Activated B cell treated with CpG ODN at 0.5 μM for 24 hours (primary cell): ENCODE measurements at regions of chr1 and their contacts with region 1.

Region 1: GRCh38 chr1:207004981-207005830 is 27.4 kb downstream of the C1orf116 start:
- DNase-seq: no peak
- ATAC-seq: peak; percentile 52
- H3K4me3 Mint-ChIP-seq: no peak overlapping the region
- H3K27ac Mint-ChIP-seq: no peak overlapping the region
- H3K4me1 Mint-ChIP-seq: peaks cover 2% of the 10 kb centered on the region
- H3K27me3 Mint-ChIP-seq: peaks cover 14% of the 10 kb centered on the region
- CTCF ChIP-seq: peak; percentile 47

Region 2: DNA sequence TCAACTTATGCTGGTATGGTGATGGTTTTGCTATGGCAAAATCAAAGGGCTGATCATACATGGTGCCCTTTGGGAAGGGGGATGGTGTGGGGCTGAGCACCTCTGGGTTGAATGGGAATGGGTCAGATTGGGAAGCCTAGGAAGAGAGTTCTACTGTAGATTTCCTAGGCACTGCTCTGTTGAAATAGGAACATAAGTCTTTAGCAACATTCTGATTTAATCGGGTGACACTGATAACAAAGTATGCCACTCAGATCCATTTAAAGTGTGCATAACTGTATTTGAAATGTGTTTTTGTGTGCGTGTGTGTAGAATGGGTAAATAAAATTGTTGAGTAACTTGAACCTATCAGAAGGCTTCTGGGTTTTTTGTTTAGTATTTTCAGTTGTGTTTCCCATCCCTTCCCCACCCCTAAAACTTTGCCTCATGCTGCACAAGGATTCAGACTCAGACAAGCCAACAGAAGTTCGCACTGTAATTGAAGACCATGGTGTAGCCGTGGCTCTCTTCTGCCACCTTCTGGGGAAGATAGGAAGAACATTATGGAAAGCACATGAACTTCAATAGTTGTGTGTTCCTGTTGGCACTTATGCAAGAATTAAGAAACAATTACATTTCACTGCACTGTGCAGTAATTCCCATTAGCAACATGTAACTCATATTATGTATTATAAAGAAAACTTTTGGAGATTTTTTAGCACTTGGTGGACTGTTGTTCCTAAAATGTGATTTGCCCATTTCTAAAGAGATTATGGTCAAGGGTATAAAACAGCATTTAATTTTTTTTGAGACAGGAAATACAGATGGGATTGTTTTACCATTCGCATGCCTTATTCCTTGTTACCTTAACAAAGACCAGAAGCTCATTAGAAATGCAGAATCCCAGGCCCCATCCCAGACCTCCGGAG is 72.5 kb after region 1 on chr1:
- CTCF ChIA-PET with region 1: no interaction called
- POLR2A ChIA-PET with region 1: no interaction called
- intact Hi-C with region 1: loop called (anchors 5 kb)
- DNase-seq: no peak
- ATAC-seq: peak; percentile 95
- H3K4me3 Mint-ChIP-seq: no peak overlapping the region
- H3K27ac Mint-ChIP-seq: no peak overlapping the region
- H3K4me1 Mint-ChIP-seq: no peaks in the 10 kb centered on the region
- H3K27me3 Mint-ChIP-seq: no peaks in the 10 kb centered on the region
- CTCF ChIP-seq: no peak

Region 3: GRCh38 chr1:207145401-207146058 is 140.3 kb after region 1 on chr1:
- CTCF ChIA-PET with region 1: no interaction called
- POLR2A ChIA-PET with region 1: no interaction called
- intact Hi-C with region 1: no loop called
- DNase-seq: no peak
- ATAC-seq: no peak
- H3K4me3 Mint-ChIP-seq: no peak overlapping the region
- H3K27ac Mint-ChIP-seq: no peak overlapping the region
- H3K4me1 Mint-ChIP-seq: no peaks in the 10 kb centered on the region
- H3K27me3 Mint-ChIP-seq: no peaks in the 10 kb centered on the region
- CTCF ChIP-seq: no peak